ENCODE measurements at regions of chr16 and their contacts with region 1.

Region 1: GRCh38 chr16:89720813-89721545 is at the starts of genes VPS9D1 and ZNF276:
- DNase-seq: peak; percentile 73 to 91 (median 86)
- ATAC-seq: peak; percentile 43 to 53
- H3K4me3 Mint-ChIP-seq: peak within 1 kb of the TSS; percentile 95 to 100 (median 97)
- H3K27ac Mint-ChIP-seq: peak within 1 kb of the TSS; percentile 92 to 99 (median 98)
- H3K4me1 Mint-ChIP-seq: peaks cover 11 to 45% (median 31%) of the 10 kb centered on the region in 4 donors
- H3K27me3 Mint-ChIP-seq: no peaks in the 10 kb centered on the region
- polyA plus RNA-seq, gene VPS9D1: 0.53 to 1.3 (median 0.91) TPM
- polyA plus RNA-seq, gene ZNF276: 15.0 to 56.0 (median 19.6) TPM

Region 2: GRCh38 chr16:89700100-89700648 is 20.8 kb before region 1 on chr16:
- POLR2A ChIA-PET with region 1: interaction called, 262 read pairs
- DNase-seq: peak; percentile 91 to 98 (median 94)
- ATAC-seq: peak; percentile 12 to 22
- H3K4me3 Mint-ChIP-seq: peak overlapping the region; percentile 47 to 85 (median 74)
- H3K27ac Mint-ChIP-seq: peak overlapping the region in 9 of 10 donors; percentile 53 to 93 (median 89)
- H3K4me1 Mint-ChIP-seq: peaks cover 6 to 39% (median 19%) of the 10 kb centered on the region in 4 donors
- H3K27me3 Mint-ChIP-seq: no peaks in the 10 kb centered on the region

Region 3: GRCh38 chr16:89749647-89750046 is 28.7 kb after region 1 on chr16:
- POLR2A ChIA-PET with region 1: interaction called, 235 read pairs
- DNase-seq: no peak
- ATAC-seq: no peak
- H3K4me3 Mint-ChIP-seq: no peak overlapping the region
- H3K27ac Mint-ChIP-seq: peak overlapping the region in 4 of 10 donors; percentile 37 to 78 (median 68)
- H3K4me1 Mint-ChIP-seq: peaks cover 8 to 44% (median 19%) of the 10 kb centered on the region in 4 donors
- H3K27me3 Mint-ChIP-seq: no peaks in the 10 kb centered on the region

Region 4: DNA sequence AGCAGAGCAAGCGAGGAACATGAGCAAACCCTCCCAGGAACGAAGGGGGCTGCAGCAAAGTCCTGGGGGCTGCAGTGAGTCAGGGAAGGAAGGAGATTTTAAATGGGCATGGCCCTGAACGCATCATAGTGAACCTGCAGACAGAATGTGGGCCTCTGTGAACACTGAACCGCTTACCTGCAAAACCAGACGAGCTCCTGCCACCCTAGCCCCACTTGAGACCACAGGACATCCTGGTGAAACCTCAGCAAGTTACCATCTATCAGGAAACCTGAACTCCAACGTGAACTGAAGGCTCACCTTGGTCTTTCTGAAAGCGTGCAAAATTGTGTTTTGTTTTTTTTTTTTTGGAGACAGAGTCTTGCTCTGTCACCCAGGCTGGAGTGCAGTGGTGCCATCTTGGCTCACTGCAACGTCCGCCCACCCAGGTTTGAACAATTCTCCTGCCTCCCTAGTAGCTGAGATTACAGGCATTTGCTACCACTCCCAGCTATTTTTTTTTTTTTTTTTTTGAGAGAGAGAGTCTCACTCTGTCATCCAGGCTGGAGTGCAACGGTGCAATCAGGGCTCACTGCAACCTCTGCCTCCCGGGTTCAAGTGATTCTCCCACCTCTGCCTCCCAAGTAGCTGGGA is 64.7 kb after region 1 on chr16:
- POLR2A ChIA-PET with region 1: interaction called, 48 read pairs
- DNase-seq: peak in 8 of 10 donors; percentile 31 to 80 (median 68)
- ATAC-seq: peak; percentile 88 to 92
- H3K4me3 Mint-ChIP-seq: peak overlapping the region; percentile 36 to 84 (median 61)
- H3K27ac Mint-ChIP-seq: peak overlapping the region in 9 of 10 donors; percentile 47 to 94 (median 82)
- H3K4me1 Mint-ChIP-seq: peaks cover 18 to 36% (median 33%) of the 10 kb centered on the region in 4 donors
- H3K27me3 Mint-ChIP-seq: no peaks in the 10 kb centered on the region

Region 5: DNA sequence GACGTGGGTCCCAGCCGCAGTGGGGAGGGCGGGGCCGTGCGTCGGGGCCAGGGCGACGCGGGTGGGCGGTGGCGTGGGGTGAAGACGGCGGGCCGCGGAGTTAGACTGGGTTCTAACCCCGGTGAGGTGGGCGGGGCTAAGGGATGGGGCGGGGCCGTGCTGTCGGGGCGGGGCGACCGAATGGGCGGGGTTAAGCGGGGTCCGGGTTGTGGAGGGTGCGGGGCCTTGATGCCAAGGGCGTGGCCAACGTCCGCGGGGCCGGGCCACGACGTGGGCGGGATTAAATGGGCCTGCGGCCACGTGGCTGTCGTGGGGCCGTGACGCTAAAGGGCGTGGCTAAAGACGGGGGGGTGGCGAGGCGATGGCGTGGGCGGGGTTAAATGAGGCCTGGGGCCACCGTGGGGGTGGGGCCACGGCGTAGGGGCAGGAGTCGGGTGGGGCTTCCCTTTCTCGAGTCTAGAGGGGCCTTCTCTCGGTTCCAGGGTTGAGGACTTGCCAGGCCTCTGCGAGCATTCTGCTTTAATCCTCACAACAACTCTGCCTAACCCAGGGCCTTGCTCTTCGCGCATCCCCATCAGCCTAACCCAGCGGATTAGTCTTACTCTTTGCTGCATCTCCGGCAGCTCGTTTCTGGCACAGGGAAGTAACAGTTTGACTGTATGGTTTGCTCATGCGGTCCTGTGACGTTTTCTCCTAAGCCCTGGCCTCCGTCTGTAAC is 153.2 kb after region 1 on chr16:
- POLR2A ChIA-PET with region 1: interaction called, 30 read pairs
- DNase-seq: peak; percentile 89 to 96 (median 92)
- ATAC-seq: peak; percentile 70 to 82
- H3K4me3 Mint-ChIP-seq: peak overlapping the region; percentile 83 to 96 (median 91)
- H3K27ac Mint-ChIP-seq: peak overlapping the region; percentile 63 to 99 (median 98)
- H3K4me1 Mint-ChIP-seq: peaks cover 3 to 26% (median 21%) of the 10 kb centered on the region in 4 donors
- H3K27me3 Mint-ChIP-seq: no peaks in the 10 kb centered on the region